HepG2 (cell line): ENCODE measurements at regions of chr11 and their contacts with region 1.

Region 1: GRCh38 chr11:134866981-134867675 is 455.1 kb upstream of the B3GAT1 start:
- DNase-seq: no peak
- ATAC-seq: peak; percentile 35; the same call in 1 of the 3 replicates
- H3K4me3 ChIP-seq: no peak overlapping the region
- H3K27ac ChIP-seq: no peak overlapping the region
- H3K4me1 ChIP-seq: no peaks in the 10 kb centered on the region
- H3K27me3 ChIP-seq: peaks cover 4 to 8% of the 10 kb centered on the region in 2 experiments; a peak in 4 of 5 replicates
- CTCF ChIP-seq: no peak
- EP300 ChIP-seq: no peak
- POLR2A ChIP-seq: no peak
- RAD21 ChIP-seq: no peak

Region 2: GRCh38 chr11:134939905-134940304 is 72.8 kb after region 1 on chr11:
- CTCF ChIA-PET with region 1: interaction called, 3 read pairs
- POLR2A ChIA-PET with region 1: no interaction called
- in situ Hi-C with region 1: no loop called
- intact Hi-C with region 1: loop called (anchors 5 kb)
- DNase-seq: peak; percentile 43
- ATAC-seq: peak; percentile 97
- H3K4me3 ChIP-seq: no peak overlapping the region
- H3K27ac ChIP-seq: no peak overlapping the region
- H3K4me1 ChIP-seq: no peaks in the 10 kb centered on the region
- H3K27me3 ChIP-seq: no peaks in the 10 kb centered on the region
- CTCF ChIP-seq: peak; percentile 66
- EP300 ChIP-seq: no peak
- POLR2A ChIP-seq: no peak
- RAD21 ChIP-seq: no peak